AG04450 (cell line): ENCODE measurements at regions of chr5 and their contacts with region 1.

Region 1: DNA sequence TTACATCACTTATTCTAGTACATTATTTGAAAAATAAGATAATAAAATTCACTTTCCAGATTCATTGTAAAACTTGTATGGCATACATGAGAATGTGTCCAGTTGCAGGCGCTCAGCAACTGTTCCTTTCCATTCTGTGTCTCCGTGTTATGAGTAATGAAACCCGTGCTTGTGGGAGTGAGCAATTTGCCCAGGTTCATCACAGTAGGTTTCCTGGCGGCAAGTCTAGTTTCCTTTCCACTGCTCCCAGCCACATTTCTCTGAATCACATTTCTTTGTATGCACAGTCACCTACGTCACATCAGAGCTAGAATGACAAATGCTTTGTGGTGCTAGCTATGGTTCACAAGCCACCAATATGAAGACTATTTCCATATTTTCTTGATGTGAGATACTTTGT is 39.9 kb downstream of the MOCS2 start:
- DNase-seq: no peak
- H3K4me3 ChIP-seq: no peak overlapping the region
- H3K27ac ChIP-seq: no peak overlapping the region
- H3K27me3 ChIP-seq: no peaks in the 10 kb centered on the region
- CTCF ChIP-seq: no peak

Region 2: GRCh38 chr5:53055359-53055758 is 14.3 kb before region 1 on chr5:
- CTCF ChIA-PET with region 1: interaction called, 12 read pairs
- POLR2A ChIA-PET with region 1: no interaction called
- DNase-seq: no peak
- H3K4me3 ChIP-seq: no peak overlapping the region
- H3K27ac ChIP-seq: no peak overlapping the region
- H3K27me3 ChIP-seq: no peaks in the 10 kb centered on the region
- CTCF ChIP-seq: no peak

Region 3: DNA sequence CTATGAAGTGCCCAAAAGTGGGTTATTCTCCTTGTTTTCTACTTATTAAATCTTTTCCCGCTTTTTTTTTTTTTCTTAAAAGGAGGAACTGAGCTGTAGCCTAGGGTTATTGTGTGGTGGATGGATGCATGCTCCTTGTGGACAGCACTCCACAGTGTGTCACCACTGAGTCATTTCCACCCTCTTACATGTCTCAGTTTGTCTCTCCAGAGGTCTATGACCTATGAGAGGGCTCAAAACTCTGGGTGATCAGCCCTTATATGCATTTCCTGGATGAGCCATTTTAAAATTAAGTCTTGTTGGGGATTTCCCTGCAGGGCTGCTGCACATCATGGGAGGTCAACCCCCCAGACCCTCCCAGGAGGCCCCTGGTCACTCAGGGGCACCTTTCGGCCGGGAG is 142.2 kb after region 1 on chr5:
- CTCF ChIA-PET with region 1: no interaction called
- POLR2A ChIA-PET with region 1: no interaction called
- DNase-seq: no peak
- H3K4me3 ChIP-seq: no peak overlapping the region
- H3K27ac ChIP-seq: no peak overlapping the region
- H3K27me3 ChIP-seq: no peaks in the 10 kb centered on the region
- CTCF ChIP-seq: no peak